ENCODE measurements at regions of chr9 and their contacts with region 1.

Region 1: GRCh38 chr9:131407717-131408195 is 13.9 kb downstream of the PRRC2B start:
- DNase-seq: no peak
- H3K4me3 Mint-ChIP-seq: peak overlapping the region; percentile 69
- H3K27ac Mint-ChIP-seq: peak overlapping the region; percentile 61
- H3K4me1 Mint-ChIP-seq: peaks cover 77% of the 10 kb centered on the region
- H3K27me3 Mint-ChIP-seq: no peaks in the 10 kb centered on the region

Region 2: DNA sequence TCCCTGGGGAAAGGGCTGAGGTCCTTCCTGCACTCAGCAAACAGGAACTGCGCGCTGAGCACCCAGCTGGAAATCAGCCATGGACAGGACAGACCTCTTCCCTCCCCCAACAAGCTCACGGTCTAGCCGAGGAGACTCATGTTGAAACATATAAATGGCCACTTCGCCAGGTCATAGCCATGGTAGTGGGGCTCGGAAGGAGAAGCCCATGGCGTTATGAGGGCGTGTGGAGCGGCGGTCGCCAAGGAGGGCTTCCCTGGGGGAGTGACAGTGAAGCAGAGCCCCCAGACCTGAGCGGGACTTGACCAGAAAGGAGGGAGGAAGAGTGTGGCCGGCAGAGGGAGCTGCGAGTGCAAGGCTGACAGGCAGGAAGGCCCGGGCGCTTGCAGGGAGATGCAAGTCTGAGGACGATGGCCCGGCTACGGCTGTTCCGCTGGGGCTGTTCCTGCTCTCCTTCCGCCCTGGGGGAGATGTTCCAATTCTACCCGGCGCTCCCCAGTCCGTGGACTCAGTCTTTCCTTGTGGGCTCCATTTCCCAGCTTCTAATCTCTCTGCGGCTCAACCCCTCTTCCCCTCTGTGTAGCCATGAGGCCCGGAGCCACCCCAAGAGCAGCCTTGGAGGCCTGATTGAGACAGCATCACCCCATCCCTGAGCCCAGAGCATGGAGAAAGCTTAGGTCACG is 57.7 kb before region 1 on chr9:
- intact Hi-C with region 1: loop called (anchors 1 kb)
- DNase-seq: peak; percentile 78
- H3K4me3 Mint-ChIP-seq: peak overlapping the region; percentile 54
- H3K27ac Mint-ChIP-seq: no peak overlapping the region
- H3K4me1 Mint-ChIP-seq: peaks cover 9% of the 10 kb centered on the region
- H3K27me3 Mint-ChIP-seq: peaks cover 10% of the 10 kb centered on the region

Region 3: GRCh38 chr9:131366761-131367401 is 40.9 kb before region 1 on chr9:
- intact Hi-C with region 1: loop called (anchors 2 kb)
- DNase-seq: no peak
- H3K4me3 Mint-ChIP-seq: no peak overlapping the region
- H3K27ac Mint-ChIP-seq: no peak overlapping the region
- H3K4me1 Mint-ChIP-seq: peaks cover 3% of the 10 kb centered on the region
- H3K27me3 Mint-ChIP-seq: no peaks in the 10 kb centered on the region

Region 4: GRCh38 chr9:131393622-131394463 is 13.9 kb before region 1 on chr9 and contains the start of gene PRRC2B:
- intact Hi-C with region 1: loop called (anchors 1 kb)
- DNase-seq: peak; percentile 76
- H3K4me3 Mint-ChIP-seq: peak within 1 kb of the TSS; percentile 89
- H3K27ac Mint-ChIP-seq: peak within 1 kb of the TSS; percentile 93
- H3K4me1 Mint-ChIP-seq: peaks cover 49% of the 10 kb centered on the region
- H3K27me3 Mint-ChIP-seq: peaks cover 21% of the 10 kb centered on the region
- total RNA-seq, gene PRRC2B: 103 and 108 TPM in 2 replicates

Region 5: GRCh38 chr9:131418143-131419028 is 10.6 kb after region 1 on chr9:
- intact Hi-C with region 1: loop called (anchors 1 kb)
- DNase-seq: no peak
- H3K4me3 Mint-ChIP-seq: peak overlapping the region; percentile 77
- H3K27ac Mint-ChIP-seq: peak overlapping the region; percentile 91
- H3K4me1 Mint-ChIP-seq: peaks cover 73% of the 10 kb centered on the region
- H3K27me3 Mint-ChIP-seq: no peaks in the 10 kb centered on the region

Region 6: GRCh38 chr9:131449276-131449675 is 41.5 kb after region 1 on chr9:
- intact Hi-C with region 1: loop called (anchors 2 kb)
- DNase-seq: no peak
- H3K4me3 Mint-ChIP-seq: no peak overlapping the region
- H3K27ac Mint-ChIP-seq: peak overlapping the region; percentile 9
- H3K4me1 Mint-ChIP-seq: peaks cover 21% of the 10 kb centered on the region
- H3K27me3 Mint-ChIP-seq: no peaks in the 10 kb centered on the region